ENCODE measurements at regions of chr12 and their contacts with region 1.

Region 1: GRCh38 chr12:123801573-123802178 is 39.6 kb downstream of the DNAH10 start:
- DNase-seq: no peak
- H3K4me3 Mint-ChIP-seq: no peak overlapping the region
- H3K27ac Mint-ChIP-seq: no peak overlapping the region
- H3K4me1 Mint-ChIP-seq: no peaks in the 10 kb centered on the region
- H3K27me3 Mint-ChIP-seq: no peaks in the 10 kb centered on the region

Region 2: GRCh38 chr12:123822804-123823203 is 21.1 kb after region 1 on chr12:
- CTCF ChIA-PET with region 1: no interaction called
- intact Hi-C with region 1: no loop called
- DNase-seq: no peak
- H3K4me3 Mint-ChIP-seq: no peak overlapping the region
- H3K27ac Mint-ChIP-seq: no peak overlapping the region
- H3K4me1 Mint-ChIP-seq: no peaks in the 10 kb centered on the region
- H3K27me3 Mint-ChIP-seq: peaks cover 17% of the 10 kb centered on the region

Region 3: DNA sequence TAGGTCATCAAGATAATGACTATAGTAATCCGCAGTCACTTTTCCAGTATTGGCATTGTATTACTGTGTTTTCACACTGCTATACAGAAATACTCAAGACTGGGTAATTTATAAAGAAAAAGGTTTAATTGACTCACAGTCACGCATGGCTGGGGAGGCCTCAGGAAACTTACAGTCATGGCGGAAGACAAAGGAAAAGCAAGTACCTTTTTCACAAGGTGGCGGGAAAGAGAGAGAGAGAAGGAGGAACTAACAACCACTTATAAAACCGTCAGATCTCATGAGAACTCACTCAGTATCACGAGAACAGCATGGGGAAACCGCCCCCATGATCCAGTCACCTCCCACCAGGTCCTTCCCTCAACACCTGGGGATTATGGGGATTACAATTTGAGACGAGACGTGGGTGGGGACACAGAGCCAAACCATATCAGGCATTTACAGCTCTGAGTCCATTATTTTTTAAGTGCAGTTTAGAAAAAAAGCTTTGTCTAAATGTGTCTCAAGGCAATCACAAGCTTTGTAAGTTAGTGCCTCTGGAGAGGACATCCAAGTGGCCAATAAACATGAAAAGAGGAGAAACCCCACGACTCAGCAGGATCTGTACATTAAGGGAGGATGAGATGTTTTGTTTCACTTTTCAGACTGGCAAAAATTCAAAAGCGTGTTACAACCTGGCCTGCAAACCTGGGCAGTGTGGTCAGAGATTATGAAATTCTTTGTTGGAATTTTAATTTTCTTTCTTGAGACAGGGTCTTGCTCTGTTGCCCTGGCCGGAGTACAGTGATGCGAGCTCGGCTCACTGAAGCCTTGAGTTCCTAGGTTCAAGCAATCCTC is 42.5 kb after region 1 on chr12:
- CTCF ChIA-PET with region 1: no interaction called
- intact Hi-C with region 1: loop called (anchors 2 kb)
- DNase-seq: no peak
- H3K4me3 Mint-ChIP-seq: no peak overlapping the region
- H3K27ac Mint-ChIP-seq: no peak overlapping the region
- H3K4me1 Mint-ChIP-seq: no peaks in the 10 kb centered on the region
- H3K27me3 Mint-ChIP-seq: no peaks in the 10 kb centered on the region

Measured in activated naive CD4-positive, alpha-beta T cell treated with anti-CD3 and anti-CD28 coated beads for 36 hours (primary cell).